ENCODE measurements at regions of chr10 and their contacts with region 1.

Region 1: GRCh38 chr10:88901206-88901983 is 21.4 kb downstream of the STAMBPL1 start:
- DNase-seq: no peak
- H3K4me3 Mint-ChIP-seq: no peak overlapping the region
- H3K27ac Mint-ChIP-seq: peak overlapping the region; percentile 85
- H3K4me1 Mint-ChIP-seq: peaks cover 54% of the 10 kb centered on the region
- H3K27me3 Mint-ChIP-seq: no peaks in the 10 kb centered on the region

Region 2: GRCh38 chr10:88851706-88852105 is 49.7 kb before region 1 on chr10 and contains the start of gene ANKRD22:
- CTCF ChIA-PET with region 1: no interaction called
- POLR2A ChIA-PET with region 1: interaction called, 5 read pairs
- intact Hi-C with region 1: loop called (anchors 1 kb)
- DNase-seq: no peak
- H3K4me3 Mint-ChIP-seq: no peak within 1 kb of the TSS
- H3K27ac Mint-ChIP-seq: no peak within 1 kb of the TSS
- H3K4me1 Mint-ChIP-seq: peaks cover 20% of the 10 kb centered on the region
- H3K27me3 Mint-ChIP-seq: peaks cover 6% of the 10 kb centered on the region
- total RNA-seq, gene ANKRD22: 0.12 to 0.24 TPM

Region 3: DNA sequence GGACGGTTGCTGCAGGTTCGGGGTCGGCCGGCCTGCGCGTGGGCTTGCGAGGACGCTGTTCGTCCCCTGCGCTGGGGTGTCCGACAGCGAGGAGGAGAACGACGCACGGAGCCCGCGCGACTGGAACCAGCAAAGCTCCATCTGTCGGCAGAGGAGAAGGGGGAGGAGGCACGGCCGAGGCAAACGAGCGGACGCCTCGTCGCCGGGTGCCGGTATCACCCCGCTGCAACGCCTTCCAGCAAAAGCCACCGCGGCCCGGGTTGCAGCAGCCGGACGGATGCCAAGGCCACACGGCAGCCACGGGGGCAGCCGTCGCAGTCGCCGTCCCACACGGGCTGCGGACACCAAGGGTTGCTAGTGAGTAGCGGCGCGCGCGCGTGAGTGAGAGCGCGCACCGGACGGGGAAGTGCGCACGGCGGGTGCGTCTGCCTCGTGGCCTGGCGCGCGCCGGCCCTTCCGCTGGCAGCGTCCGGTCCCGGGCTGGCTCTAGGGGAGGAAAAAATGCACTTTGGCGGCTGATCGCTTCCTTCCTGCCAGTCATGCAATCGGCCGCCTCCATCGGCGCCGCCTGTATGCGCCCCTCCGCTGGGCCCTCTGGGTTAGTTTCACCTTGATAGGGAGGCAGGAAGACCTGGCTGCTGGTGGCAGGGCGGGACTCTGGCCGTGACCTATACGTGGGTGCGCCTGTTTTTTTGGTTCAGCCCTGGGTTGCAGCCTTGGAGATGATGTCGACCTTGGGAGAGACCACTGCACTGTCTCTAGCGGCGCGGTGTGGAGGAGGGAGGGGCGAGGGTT is 20.9 kb before region 1 on chr10:
- CTCF ChIA-PET with region 1: interaction called, 17 read pairs
- POLR2A ChIA-PET with region 1: interaction called, 13 read pairs
- intact Hi-C with region 1: loop called (anchors 1 kb)
- DNase-seq: peak; percentile 86
- H3K4me3 Mint-ChIP-seq: peak overlapping the region; percentile 88
- H3K27ac Mint-ChIP-seq: peak overlapping the region; percentile 95
- H3K4me1 Mint-ChIP-seq: peaks cover 59% of the 10 kb centered on the region
- H3K27me3 Mint-ChIP-seq: no peaks in the 10 kb centered on the region

Region 4: DNA sequence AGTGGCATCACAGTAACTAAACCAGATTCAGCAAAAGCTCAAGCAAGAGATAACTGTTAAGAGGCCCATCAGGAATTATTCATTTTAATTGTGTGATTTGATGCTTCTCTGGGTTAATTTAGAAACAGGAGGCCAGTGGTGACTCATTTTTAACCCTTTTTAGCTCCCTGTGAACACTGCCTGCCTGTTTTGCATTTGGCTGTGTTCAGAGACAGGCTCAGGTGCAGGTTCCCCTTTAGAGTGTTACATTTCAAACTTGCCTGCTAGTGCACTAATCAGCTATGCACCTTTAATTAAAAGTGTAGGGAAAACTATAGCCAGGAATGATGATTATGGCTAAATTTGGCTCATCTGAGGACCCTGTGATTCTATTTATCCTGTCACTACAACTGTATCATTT is 14.8 kb before region 1 on chr10:
- CTCF ChIA-PET with region 1: interaction called, 17 read pairs
- POLR2A ChIA-PET with region 1: interaction called, 11 read pairs
- intact Hi-C with region 1: loop called (anchors 1 kb)
- DNase-seq: peak; percentile 45
- H3K4me3 Mint-ChIP-seq: no peak overlapping the region
- H3K27ac Mint-ChIP-seq: no peak overlapping the region
- H3K4me1 Mint-ChIP-seq: peaks cover 83% of the 10 kb centered on the region
- H3K27me3 Mint-ChIP-seq: no peaks in the 10 kb centered on the region

Region 5: GRCh38 chr10:88913127-88913526 is 11.7 kb after region 1 on chr10:
- CTCF ChIA-PET with region 1: no interaction called
- POLR2A ChIA-PET with region 1: no interaction called
- intact Hi-C with region 1: no loop called
- DNase-seq: no peak
- H3K4me3 Mint-ChIP-seq: no peak overlapping the region
- H3K27ac Mint-ChIP-seq: no peak overlapping the region
- H3K4me1 Mint-ChIP-seq: peaks cover 7% of the 10 kb centered on the region
- H3K27me3 Mint-ChIP-seq: no peaks in the 10 kb centered on the region

Region 6: GRCh38 chr10:89147256-89147655 is 245.9 kb after region 1 on chr10:
- CTCF ChIA-PET with region 1: no interaction called
- POLR2A ChIA-PET with region 1: no interaction called
- intact Hi-C with region 1: no loop called
- DNase-seq: no peak
- H3K4me3 Mint-ChIP-seq: no peak overlapping the region
- H3K27ac Mint-ChIP-seq: no peak overlapping the region
- H3K4me1 Mint-ChIP-seq: peaks cover 2% of the 10 kb centered on the region
- H3K27me3 Mint-ChIP-seq: peaks cover 5% of the 10 kb centered on the region

Measured in activated CD4-positive, alpha-beta memory T cell treated with anti-CD3 and anti-CD28 coated beads for 36 hours (primary cell).